ENCODE measurements at regions of chr11 and their contacts with region 1.

Region 1: GRCh38 chr11:85810871-85811611 is at the start of gene SYTL2:
- DNase-seq: peak; percentile 85
- ATAC-seq: peak; percentile 99
- total RNA-seq, gene SYTL2: 4.0 TPM

Region 2: DNA sequence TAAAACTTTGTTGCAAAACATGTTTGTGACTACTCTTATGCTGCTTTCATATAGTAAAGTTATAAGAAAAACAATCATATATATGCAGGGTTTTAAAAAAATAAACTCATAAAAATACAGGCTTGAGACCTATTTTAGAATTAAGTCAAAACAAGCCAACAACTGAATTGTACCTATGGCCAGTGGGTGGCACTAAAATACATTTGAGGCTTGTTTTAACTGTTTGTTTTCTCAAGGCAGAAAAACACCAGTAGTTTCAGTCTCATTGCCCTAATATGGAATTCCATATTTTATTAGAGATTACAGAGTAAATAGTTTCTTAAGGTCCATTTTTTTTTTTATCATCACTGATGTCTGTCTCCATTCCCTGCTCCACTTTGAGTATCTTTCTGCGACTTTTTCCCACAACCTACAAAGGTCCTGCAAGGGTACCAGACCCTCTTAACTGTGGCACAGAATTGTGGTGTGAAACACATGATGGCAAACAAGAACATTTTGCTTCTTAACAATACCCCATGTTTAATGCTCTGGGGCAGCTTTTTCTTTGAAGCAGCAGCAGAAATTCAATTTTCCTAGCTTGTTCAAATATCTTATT is 116.6 kb before region 1 on chr11:
- intact Hi-C with region 1: loop called (anchors 10 kb)
- DNase-seq: no peak
- ATAC-seq: no peak

Region 3: DNA sequence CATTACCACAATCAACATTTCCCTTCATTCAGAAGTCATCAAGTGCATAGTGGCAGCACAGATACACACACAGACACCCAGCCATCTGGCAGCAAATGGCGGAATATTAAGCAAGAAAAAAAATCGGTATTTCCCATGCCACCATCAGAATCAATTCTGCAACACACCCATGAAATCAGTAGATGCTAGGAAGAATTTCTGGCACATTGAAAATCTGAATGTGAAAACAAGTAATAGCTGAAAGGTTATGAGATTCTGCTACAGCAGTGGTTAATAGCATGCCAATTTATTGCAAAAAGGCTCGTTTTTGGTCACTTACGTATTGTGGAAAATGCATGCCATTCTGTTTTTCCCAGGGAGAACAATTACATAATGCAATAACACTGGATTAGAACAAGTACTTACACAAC is 166.7 kb after region 1 on chr11:
- intact Hi-C with region 1: no loop called
- DNase-seq: peak; percentile 15
- ATAC-seq: peak; percentile 68

Region 4: GRCh38 chr11:86523738-86524619 is 712.9 kb after region 1 on chr11:
- intact Hi-C with region 1: no loop called
- DNase-seq: no peak
- ATAC-seq: peak; percentile 36

Measured in Right ventricle myocardium superior (tissue), 1 donor.